Activated B cell treated with CpG ODN at 0.5 μM for 24 hours (primary cell): ENCODE measurements at regions of chrX and their contacts with region 1.

Region 1: DNA sequence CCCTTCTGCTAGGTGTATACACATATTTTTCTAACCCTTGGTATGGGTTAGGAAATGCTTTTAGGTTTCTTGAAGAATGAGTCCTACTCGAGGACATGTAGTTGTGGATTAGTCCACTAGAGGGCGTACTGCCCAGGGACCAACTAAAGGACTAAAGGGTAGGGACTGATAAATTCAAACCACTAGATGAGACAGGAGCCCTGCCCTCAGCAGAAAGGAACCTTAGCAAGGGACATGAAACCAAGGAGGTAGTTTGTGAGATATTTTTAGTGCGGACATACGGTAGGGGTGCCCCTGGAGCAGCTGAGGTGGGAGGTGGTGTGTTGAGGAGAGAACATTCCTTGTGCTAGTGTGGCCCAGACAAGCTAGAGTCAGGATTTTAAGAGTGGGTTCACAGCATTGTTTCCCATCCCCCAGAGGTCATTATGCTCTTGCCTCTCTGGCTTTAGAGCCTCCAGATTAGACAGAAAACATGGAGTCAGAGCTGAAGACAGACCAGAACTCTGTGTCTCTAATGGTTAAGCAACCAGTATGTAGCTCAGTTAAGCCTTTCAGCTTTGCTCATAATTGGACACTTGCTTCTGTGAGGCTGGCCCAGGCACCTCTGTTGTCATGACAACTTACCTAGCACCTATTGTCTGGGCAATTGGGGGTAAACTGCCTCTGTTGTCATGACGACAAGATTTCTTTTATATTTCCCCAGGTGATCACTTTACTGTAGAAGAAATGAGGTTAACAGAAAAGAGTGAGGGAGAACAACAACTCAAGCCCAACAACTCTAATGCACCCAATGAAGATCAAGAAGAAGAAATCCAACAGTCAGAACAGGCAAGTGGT is 1.0 kb downstream of the TMEM31 start:
- DNase-seq: no peak
- ATAC-seq: peak; percentile 31
- H3K4me3 Mint-ChIP-seq: no peak overlapping the region
- H3K27ac Mint-ChIP-seq: no peak overlapping the region
- H3K4me1 Mint-ChIP-seq: no peaks in the 10 kb centered on the region
- H3K27me3 Mint-ChIP-seq: no peaks in the 10 kb centered on the region
- CTCF ChIP-seq: no peak

Region 2: GRCh38 chrX:103081051-103081450 is 630.7 kb before region 1 on chrX:
- CTCF ChIA-PET with region 1: no interaction called
- POLR2A ChIA-PET with region 1: no interaction called
- intact Hi-C with region 1: no loop called
- DNase-seq: no peak
- ATAC-seq: no peak
- H3K4me3 Mint-ChIP-seq: no peak overlapping the region
- H3K27ac Mint-ChIP-seq: no peak overlapping the region
- H3K4me1 Mint-ChIP-seq: no peaks in the 10 kb centered on the region
- H3K27me3 Mint-ChIP-seq: no peaks in the 10 kb centered on the region
- CTCF ChIP-seq: no peak

Region 3: GRCh38 chrX:103533511-103534216 is 178.1 kb before region 1 on chrX:
- CTCF ChIA-PET with region 1: interaction called, 4 read pairs
- POLR2A ChIA-PET with region 1: no interaction called
- intact Hi-C with region 1: loop called (anchors 1 kb)
- DNase-seq: peak; percentile 45
- ATAC-seq: peak; percentile 40
- H3K4me3 Mint-ChIP-seq: peak overlapping the region; percentile 61
- H3K27ac Mint-ChIP-seq: no peak overlapping the region
- H3K4me1 Mint-ChIP-seq: peaks cover 5% of the 10 kb centered on the region
- H3K27me3 Mint-ChIP-seq: no peaks in the 10 kb centered on the region
- CTCF ChIP-seq: no peak

Region 4: DNA sequence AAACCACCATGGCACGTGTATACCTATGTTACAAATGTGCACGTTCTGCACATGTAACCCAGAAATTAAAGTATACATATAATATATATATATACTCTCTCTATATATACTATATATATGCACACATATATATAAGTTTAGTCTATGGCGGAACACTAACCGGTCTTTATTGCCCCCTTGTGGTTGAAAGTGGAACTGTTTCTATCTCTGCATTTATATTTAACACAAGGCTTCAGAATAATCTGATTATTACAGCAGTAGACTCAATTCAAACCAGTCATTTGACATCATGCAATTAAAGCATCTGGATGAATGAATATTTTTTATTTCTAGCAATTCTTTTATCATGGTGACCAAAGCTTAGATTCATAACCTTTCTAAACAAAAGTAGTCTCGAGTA is 105.8 kb after region 1 on chrX:
- CTCF ChIA-PET with region 1: interaction called, 3 read pairs
- POLR2A ChIA-PET with region 1: no interaction called
- intact Hi-C with region 1: loop called (anchors 1 kb)
- DNase-seq: no peak
- ATAC-seq: peak; percentile 37
- H3K4me3 Mint-ChIP-seq: no peak overlapping the region
- H3K27ac Mint-ChIP-seq: no peak overlapping the region
- H3K4me1 Mint-ChIP-seq: peaks cover 2% of the 10 kb centered on the region
- H3K27me3 Mint-ChIP-seq: no peaks in the 10 kb centered on the region
- CTCF ChIP-seq: no peak